ENCODE measurements at regions of chr5 and their contacts with region 1.

Region 1: GRCh38 chr5:55534436-55535198 is at the start of gene PLPP1:
- DNase-seq: peak; percentile 82
- H3K4me3 Mint-ChIP-seq: peak within 1 kb of the TSS; percentile 94
- H3K27ac Mint-ChIP-seq: peak within 1 kb of the TSS; percentile 70
- H3K4me1 Mint-ChIP-seq: peaks cover 51% of the 10 kb centered on the region
- H3K27me3 Mint-ChIP-seq: no peaks in the 10 kb centered on the region
- total RNA-seq, gene PLPP1: 49.6 and 52.1 TPM in 2 replicates

Region 2: DNA sequence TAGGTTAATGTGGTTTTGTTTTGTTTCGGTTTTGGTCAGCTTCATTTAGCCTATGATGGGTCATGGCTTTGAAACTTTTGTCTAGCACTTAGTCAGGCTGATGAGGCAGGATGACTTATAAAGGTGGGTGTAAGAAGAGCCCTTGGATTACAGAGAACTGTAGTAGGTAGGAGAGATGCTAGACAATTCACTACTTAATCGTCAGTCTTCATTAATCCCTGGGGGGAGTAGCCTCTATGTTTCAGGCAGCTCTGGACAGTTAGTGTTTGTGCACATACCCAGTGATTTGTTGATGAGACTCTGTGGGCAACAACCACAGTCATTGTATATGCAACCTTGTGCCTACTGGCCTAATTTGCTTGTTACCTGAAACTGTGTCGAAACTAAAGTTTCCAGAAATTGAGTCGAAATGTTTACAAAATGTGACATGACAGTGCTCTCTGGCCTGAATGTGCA is 113.5 kb before region 1 on chr5:
- intact Hi-C with region 1: loop called (anchors 2 kb)
- DNase-seq: no peak
- H3K4me3 Mint-ChIP-seq: no peak overlapping the region
- H3K27ac Mint-ChIP-seq: peak overlapping the region; percentile 65
- H3K4me1 Mint-ChIP-seq: peaks cover 27% of the 10 kb centered on the region
- H3K27me3 Mint-ChIP-seq: no peaks in the 10 kb centered on the region

Region 3: GRCh38 chr5:55467862-55468551 is 66.6 kb before region 1 on chr5:
- intact Hi-C with region 1: no loop called
- DNase-seq: no peak
- H3K4me3 Mint-ChIP-seq: no peak overlapping the region
- H3K27ac Mint-ChIP-seq: no peak overlapping the region
- H3K4me1 Mint-ChIP-seq: peaks cover 16% of the 10 kb centered on the region
- H3K27me3 Mint-ChIP-seq: no peaks in the 10 kb centered on the region

Region 4: DNA sequence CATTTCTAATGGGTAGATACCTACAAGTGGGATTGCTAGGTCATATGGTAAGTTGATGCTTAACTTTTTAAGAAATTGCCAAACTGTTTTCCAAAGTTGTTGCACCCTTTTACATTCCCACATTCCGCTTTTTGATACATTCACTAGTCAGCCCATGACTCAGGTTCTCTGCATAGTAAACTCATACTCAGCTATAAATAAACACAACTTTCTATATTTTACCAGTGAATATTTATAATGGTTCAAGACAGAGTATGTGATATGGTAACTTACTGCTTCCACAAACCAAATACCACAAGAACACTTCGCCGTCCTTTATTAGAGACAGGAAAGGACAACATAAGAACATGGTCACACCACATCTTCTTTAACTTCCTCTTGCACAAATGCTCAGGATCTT is 53.8 kb before region 1 on chr5:
- intact Hi-C with region 1: loop called (anchors 2 kb)
- DNase-seq: no peak
- H3K4me3 Mint-ChIP-seq: no peak overlapping the region
- H3K27ac Mint-ChIP-seq: no peak overlapping the region
- H3K4me1 Mint-ChIP-seq: peaks cover 32% of the 10 kb centered on the region
- H3K27me3 Mint-ChIP-seq: no peaks in the 10 kb centered on the region

Region 5: GRCh38 chr5:55577353-55578060 is 42.9 kb after region 1 on chr5:
- intact Hi-C with region 1: loop called (anchors 2 kb)
- DNase-seq: no peak
- H3K4me3 Mint-ChIP-seq: no peak overlapping the region
- H3K27ac Mint-ChIP-seq: peak overlapping the region; percentile 65
- H3K4me1 Mint-ChIP-seq: peaks cover 48% of the 10 kb centered on the region
- H3K27me3 Mint-ChIP-seq: no peaks in the 10 kb centered on the region

Region 6: DNA sequence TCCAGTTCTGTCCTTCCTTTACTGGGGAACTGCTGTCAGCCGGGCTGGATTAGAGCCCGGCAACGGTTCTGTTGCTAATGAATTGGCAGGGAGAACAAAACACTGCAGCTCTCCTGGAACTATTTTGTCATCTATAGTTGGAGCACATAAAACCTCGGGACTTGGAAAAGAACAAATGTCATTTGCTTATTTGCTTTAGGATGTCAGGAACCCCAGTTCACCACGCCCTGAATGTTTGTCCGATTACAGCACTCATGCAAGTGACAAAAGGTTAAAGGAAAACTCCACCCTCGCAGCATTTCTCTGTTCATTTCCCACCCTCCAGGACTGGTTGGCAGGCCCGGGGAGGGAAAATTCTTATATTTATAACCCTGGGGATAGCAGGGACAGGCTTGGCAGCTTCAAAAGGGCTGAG is 66.6 kb after region 1 on chr5:
- intact Hi-C with region 1: loop called (anchors 5 kb)
- DNase-seq: no peak
- H3K4me3 Mint-ChIP-seq: peak overlapping the region; percentile 51
- H3K27ac Mint-ChIP-seq: peak overlapping the region; percentile 83
- H3K4me1 Mint-ChIP-seq: peaks cover 63% of the 10 kb centered on the region
- H3K27me3 Mint-ChIP-seq: no peaks in the 10 kb centered on the region

Region 7: GRCh38 chr5:55650386-55650785 is 115.8 kb after region 1 on chr5:
- intact Hi-C with region 1: loop called (anchors 5 kb)
- DNase-seq: no peak
- H3K4me3 Mint-ChIP-seq: peak overlapping the region; percentile 43
- H3K27ac Mint-ChIP-seq: peak overlapping the region; percentile 29
- H3K4me1 Mint-ChIP-seq: peaks cover 28% of the 10 kb centered on the region
- H3K27me3 Mint-ChIP-seq: no peaks in the 10 kb centered on the region

Region 8: DNA sequence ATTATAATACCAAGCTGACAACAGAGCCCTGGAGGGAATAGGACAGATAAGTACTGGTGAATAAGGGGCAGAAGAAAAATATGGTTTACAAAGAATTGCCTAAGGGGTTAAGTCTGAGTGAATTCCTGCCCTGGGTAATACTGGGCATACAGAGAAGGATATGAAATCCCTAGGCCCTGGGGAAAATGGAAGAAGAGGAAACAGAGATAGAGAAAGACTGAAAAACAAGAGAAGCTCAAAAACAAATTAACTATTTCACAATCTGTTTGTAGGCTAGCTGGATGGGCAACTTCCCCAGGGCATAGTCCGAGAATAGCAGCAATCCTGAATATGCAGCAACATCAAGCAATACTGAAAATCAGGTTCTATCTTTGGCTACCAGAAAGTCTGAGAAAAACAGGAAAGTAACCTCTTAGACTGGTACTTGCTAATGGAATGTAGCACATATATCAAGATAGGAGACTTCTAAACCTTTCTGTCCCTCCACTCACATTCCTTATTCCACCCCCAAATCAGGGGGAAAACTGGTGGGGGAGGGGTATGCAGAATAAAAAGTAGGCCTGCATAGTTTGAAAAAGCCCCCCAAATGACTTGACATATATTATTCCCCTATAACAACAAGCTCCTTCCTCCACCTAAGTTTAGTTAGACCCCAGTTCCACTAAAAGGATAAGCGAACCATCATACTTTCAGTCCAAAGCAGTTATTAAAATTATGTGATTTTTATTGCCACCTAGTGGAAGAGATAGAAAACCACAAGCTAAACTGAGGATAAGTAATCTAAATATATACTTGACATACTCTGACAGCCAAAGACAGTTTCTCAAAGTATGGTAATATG is 156.9 kb after region 1 on chr5:
- intact Hi-C with region 1: loop called (anchors 5 kb)
- DNase-seq: no peak
- H3K4me3 Mint-ChIP-seq: no peak overlapping the region
- H3K27ac Mint-ChIP-seq: peak overlapping the region; percentile 69
- H3K4me1 Mint-ChIP-seq: peaks cover 18% of the 10 kb centered on the region
- H3K27me3 Mint-ChIP-seq: no peaks in the 10 kb centered on the region

Measured in activated T-helper 2 cell treated with anti-CD3 and anti-CD28 coated beads, Interferon-gamma antibody, Interleukin-2, Interleukin-4, amounts not matched to agents 10 μg/mL and 5 μg/mL and 100 μg/mL, durations not matched to agents 14 hours and 24 hours and 36 hours (primary cell).